HAP-1 (cell line): ENCODE measurements at regions of chr9 and their contacts with region 1.

Region 1: DNA sequence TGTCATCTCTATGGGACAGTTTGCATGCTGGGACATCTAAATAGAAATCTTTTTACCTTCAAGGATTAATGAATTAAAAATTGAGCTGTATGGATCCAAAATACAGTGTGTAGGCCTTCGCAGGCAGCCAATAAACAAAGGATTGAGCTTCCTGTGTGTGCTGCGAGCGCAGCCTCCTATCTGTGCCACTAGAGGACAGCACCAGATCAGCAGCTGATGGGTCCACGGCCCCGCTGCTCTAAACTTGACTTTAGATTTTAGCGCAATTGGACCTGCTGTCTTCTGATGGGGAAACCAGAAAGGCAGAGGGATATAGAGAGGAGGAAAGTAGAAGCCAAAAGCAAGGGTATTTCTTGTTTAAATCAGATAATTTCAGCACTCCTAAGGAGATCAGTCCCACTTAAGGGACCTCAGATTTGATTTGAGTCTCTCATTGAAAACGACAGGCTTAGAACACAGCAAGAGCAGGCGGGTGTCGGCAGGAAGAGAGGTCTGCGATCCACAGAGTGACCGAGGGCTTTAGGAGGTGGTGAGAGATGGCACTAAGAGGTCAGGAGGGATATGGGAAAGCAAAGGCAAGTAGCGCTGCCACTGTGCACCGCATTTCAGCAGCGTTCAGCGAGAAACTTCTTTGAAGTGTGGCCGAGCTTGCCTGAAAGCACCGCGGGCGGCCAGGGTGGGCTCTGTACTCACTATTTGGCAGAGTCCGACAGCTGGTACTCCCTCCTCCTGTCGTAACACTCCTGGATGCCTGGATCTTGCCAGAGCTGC is 214.3 kb downstream of the GNA14 start:
- DNase-seq: peak; percentile 37 to 68
- H3K4me3 ChIP-seq: no peak overlapping the region
- H3K4me1 ChIP-seq: no peaks in the 10 kb centered on the region
- H3K27me3 ChIP-seq: no peaks in the 10 kb centered on the region

Region 2: DNA sequence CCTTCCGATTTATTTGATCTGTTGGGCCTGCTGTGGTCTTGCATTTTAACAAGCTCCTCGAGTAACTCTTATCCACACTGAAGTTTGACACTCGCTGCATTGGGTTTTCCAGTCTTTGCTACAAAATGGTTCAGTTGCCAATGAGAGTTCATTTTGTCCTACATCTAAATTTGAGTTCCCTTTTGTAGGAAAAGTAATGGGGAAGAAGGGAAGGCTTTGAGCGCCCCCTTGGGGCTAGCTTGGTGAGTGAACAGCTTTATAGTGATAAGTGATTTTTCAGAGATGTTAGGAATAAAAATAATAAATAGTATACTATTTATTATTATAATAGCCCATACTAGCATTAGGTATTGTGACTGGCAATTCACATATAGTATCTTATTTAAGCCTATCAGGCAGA is 687.6 kb after region 1 on chr9:
- in situ Hi-C with region 1: loop called (anchors 25 kb)
- DNase-seq: peak; percentile 56 to 80
- H3K4me3 ChIP-seq: no peak overlapping the region
- H3K4me1 ChIP-seq: no peaks in the 10 kb centered on the region
- H3K27me3 ChIP-seq: no peaks in the 10 kb centered on the region; the same call in 1 of the 2 replicates